Cardiac septum (tissue), 1 donor: ENCODE measurements at regions of chr2 and their contacts with region 1.

Region 1: GRCh38 chr2:71226965-71227560 is at the start of gene PAIP2B:
- DNase-seq: peak; percentile 99
- total RNA-seq, gene PAIP2B: 30.7 TPM

Region 2: GRCh38 chr2:71276311-71277146 is 49.5 kb after region 1 on chr2:
- intact Hi-C with region 1: loop called (anchors 1 kb)
- DNase-seq: peak; percentile 96

Region 3: GRCh38 chr2:71331581-71332434 is 104.7 kb after region 1 on chr2 and contains the start of gene ZNF638:
- intact Hi-C with region 1: loop called (anchors 1 kb)
- DNase-seq: peak; percentile 96
- total RNA-seq, gene ZNF638: 79.5 TPM

Region 4: GRCh38 chr2:71385012-71385411 is 157.9 kb after region 1 on chr2:
- intact Hi-C with region 1: loop called (anchors 10 kb)
- DNase-seq: no peak

Region 5: GRCh38 chr2:71460595-71461303 is 233.7 kb after region 1 on chr2:
- intact Hi-C with region 1: loop called (anchors 5 kb)
- DNase-seq: peak; percentile 71

Region 6: GRCh38 chr2:71510196-71510807 is 283.2 kb after region 1 on chr2:
- intact Hi-C with region 1: loop called (anchors 2 kb)
- DNase-seq: no peak